CD4-positive, alpha-beta T cell (primary cell): ENCODE measurements at regions of chr1 and their contacts with region 1.

Region 1: DNA sequence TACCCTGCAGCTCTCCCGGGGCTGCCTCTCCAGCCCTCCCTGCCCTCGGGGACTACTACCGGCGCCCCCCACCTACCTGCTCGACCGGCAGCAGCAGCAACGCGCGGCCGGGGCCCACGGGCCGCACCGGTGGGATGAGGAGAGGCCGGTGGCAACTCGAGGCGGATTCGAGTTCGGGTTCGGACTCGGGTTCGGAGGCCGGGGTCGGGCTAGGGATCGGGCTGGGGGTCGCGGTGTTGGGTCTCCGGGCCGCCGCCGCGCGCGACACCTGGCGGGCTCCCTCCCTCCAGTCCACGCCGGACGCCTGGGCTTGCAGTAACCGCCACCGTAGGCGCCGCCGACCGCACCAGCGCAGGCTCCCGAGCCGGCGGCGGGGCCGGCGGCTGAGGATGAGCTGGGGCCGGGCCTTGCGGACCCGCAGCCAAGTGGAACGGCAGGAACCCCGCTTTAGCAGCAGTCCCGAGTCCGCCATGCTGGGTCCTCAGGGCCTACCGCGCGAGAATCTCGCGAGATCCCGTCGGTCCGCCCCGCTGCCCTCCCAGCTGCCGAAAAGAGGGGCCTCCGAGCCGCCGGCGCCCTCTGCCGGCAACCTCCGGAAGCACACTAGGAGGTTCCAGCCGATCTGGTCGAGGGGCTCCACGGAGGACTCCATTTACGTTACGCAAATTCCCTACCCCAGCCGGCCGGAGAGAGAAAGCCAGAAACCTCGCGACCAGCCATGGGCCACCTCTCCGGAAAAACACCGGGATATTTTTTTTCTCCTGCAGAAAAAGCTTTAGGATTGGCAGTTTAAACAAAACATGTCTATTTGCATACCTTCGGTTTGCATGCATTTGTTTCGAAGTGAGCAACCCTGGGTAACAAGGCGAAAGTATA is at the start of gene NOL9:
- DNase-seq: peak; percentile 91 to 97 (median 94)
- ATAC-seq: peak; percentile 98
- H3K4me3 ChIP-seq: peak within 1 kb of the TSS; percentile 94
- H3K4me3 Mint-ChIP-seq: peak within 1 kb of the TSS; percentile 85
- H3K27ac ChIP-seq: peak within 1 kb of the TSS; percentile 22 to 64
- H3K27ac Mint-ChIP-seq: peak within 1 kb of the TSS; percentile 70
- H3K4me1 ChIP-seq: peaks cover 30% of the 10 kb centered on the region
- H3K4me1 Mint-ChIP-seq: peaks cover 6% of the 10 kb centered on the region
- H3K27me3 ChIP-seq: no peaks in the 10 kb centered on the region
- H3K27me3 Mint-ChIP-seq: no peaks in the 10 kb centered on the region
- CTCF ChIP-seq: peak; percentile 93
- total RNA-seq, gene NOL9: 52.3 to 54.1 TPM

Region 2: DNA sequence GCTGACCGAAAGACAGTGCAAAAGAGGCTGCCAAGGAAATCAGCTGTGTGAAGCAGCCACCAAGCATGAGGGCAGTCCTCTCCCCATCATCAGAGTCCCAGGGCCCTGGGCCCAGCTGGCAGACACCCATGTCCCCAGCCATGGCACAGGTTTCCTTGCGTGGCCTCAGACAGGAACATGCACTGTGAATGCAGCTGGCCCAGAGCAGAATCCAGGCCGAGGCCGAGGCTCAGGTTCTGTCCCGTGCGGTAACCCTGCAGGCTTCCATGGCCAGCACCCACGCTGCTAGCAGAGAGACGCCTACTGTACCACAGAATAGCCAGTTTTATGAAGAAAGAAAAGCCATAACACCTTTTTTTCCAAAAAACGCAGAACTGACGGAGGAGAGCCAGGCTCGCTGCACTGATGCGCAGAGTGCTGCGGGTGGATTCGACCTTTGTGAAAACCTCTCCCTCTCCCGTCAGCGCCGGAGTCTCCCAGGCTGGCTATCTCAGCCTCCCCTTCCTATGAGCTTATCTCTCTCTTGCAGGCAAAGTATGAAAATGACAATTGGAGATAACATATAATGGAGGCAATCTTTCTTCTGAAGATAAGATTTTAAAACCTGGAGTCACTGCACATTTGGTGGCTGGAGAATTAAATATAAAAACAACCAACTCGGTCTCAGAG is 668.7 kb before region 1 on chr1:
- CTCF ChIA-PET with region 1: no interaction called
- POLR2A ChIA-PET with region 1: no interaction called
- intact Hi-C with region 1: no loop called
- DNase-seq: no peak
- ATAC-seq: no peak
- H3K4me3 ChIP-seq: no peak overlapping the region
- H3K4me3 Mint-ChIP-seq: no peak overlapping the region
- H3K27ac ChIP-seq: no peak overlapping the region
- H3K27ac Mint-ChIP-seq: no peak overlapping the region
- H3K4me1 ChIP-seq: no peaks in the 10 kb centered on the region
- H3K4me1 Mint-ChIP-seq: no peaks in the 10 kb centered on the region
- H3K27me3 ChIP-seq: no peaks in the 10 kb centered on the region
- H3K27me3 Mint-ChIP-seq: no peaks in the 10 kb centered on the region
- CTCF ChIP-seq: no peak

Region 3: GRCh38 chr1:6489799-6490180 is 64.5 kb before region 1 on chr1:
- CTCF ChIA-PET with region 1: interaction called, 4 read pairs
- POLR2A ChIA-PET with region 1: interaction called, 9 read pairs
- intact Hi-C with region 1: loop called (anchors 1 to 2 kb)
- DNase-seq: peak; percentile 59 to 90 (median 72)
- ATAC-seq: peak; percentile 58
- H3K4me3 ChIP-seq: peak overlapping the region; percentile 90
- H3K4me3 Mint-ChIP-seq: peak overlapping the region; percentile 82
- H3K27ac ChIP-seq: no peak overlapping the region
- H3K27ac Mint-ChIP-seq: no peak overlapping the region
- H3K4me1 ChIP-seq: peaks cover 58% of the 10 kb centered on the region
- H3K4me1 Mint-ChIP-seq: peaks cover 30% of the 10 kb centered on the region
- H3K27me3 ChIP-seq: peaks cover 12 to 14% of the 10 kb centered on the region in 2 experiments
- H3K27me3 Mint-ChIP-seq: peaks cover 21% of the 10 kb centered on the region
- CTCF ChIP-seq: peak; percentile 96

Region 4: GRCh38 chr1:6602669-6603237 is 48.5 kb after region 1 on chr1 and contains the start of gene KLHL21:
- CTCF ChIA-PET with region 1: interaction called, 22 read pairs
- POLR2A ChIA-PET with region 1: interaction called, 38 read pairs
- intact Hi-C with region 1: loop called in 1 of 2 experiments (anchors 10 kb)
- DNase-seq: peak; percentile 65 to 93 (median 84)
- ATAC-seq: peak; percentile 48
- H3K4me3 ChIP-seq: peak within 1 kb of the TSS; percentile 95
- H3K4me3 Mint-ChIP-seq: peak within 1 kb of the TSS; percentile 100
- H3K27ac ChIP-seq: peak within 1 kb of the TSS; percentile 80 to 95
- H3K27ac Mint-ChIP-seq: peak within 1 kb of the TSS; percentile 100
- H3K4me1 ChIP-seq: peaks cover 54% of the 10 kb centered on the region
- H3K4me1 Mint-ChIP-seq: peaks cover 36% of the 10 kb centered on the region
- H3K27me3 ChIP-seq: no peaks in the 10 kb centered on the region
- H3K27me3 Mint-ChIP-seq: no peaks in the 10 kb centered on the region
- CTCF ChIP-seq: no peak
- total RNA-seq, gene KLHL21: 32.0 to 33.5 TPM

Region 5: DNA sequence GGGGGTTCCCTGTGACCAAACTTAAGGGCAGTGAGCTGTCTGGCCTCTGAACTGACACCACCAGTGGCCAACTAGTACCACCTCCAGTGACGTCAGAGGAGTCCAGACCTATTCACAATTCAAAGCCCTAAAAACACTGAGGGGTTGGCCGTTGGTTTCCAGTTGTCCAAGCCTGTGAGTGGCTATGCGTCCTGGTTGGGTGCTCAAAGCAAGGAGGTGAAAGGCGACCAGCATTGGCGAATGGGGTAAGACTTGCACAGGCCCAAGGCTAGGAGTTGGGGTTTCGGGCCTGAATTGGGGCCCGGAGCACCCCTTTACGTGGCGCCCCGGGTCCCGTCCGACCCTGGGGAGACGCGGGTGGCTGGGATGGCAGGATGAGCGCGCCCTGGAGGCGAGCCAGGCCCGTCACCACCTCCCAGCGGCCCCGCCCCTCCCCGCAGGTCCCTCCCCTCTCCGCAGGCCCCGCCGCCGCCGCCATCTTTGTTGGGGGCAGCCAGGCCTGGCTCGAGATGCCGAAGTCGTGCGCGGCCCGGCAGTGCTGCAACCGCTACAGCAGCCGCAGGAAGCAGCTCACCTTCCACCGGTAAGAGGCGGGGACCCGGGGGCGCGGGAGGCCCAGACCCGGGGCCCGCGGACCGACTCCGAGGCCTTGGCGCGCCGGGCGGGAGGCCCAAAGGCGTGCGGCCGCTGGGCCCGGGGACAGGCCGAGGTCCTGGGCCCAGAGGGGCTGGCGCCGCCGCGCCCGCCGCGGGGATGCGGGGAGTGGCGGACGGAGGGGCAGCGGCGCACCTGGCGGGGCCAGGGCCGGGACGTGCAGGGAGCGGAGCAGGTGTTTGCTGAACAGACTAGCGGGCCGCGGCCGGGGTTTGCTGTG is 70.7 kb after region 1 on chr1 and contains the start of gene THAP3:
- CTCF ChIA-PET with region 1: interaction called, 15 read pairs
- POLR2A ChIA-PET with region 1: no interaction called
- intact Hi-C with region 1: loop called (anchors 1 to 5 kb)
- DNase-seq: peak; percentile 86 to 95 (median 90)
- ATAC-seq: peak; percentile 98
- H3K4me3 ChIP-seq: peak within 1 kb of the TSS; percentile 72
- H3K4me3 Mint-ChIP-seq: peak within 1 kb of the TSS; percentile 94
- H3K27ac ChIP-seq: peak within 1 kb of the TSS in 1 of 2 donors; percentile 38
- H3K27ac Mint-ChIP-seq: peak within 1 kb of the TSS; percentile 84
- H3K4me1 ChIP-seq: peaks cover 31% of the 10 kb centered on the region
- H3K4me1 Mint-ChIP-seq: peaks cover 29% of the 10 kb centered on the region
- H3K27me3 ChIP-seq: no peaks in the 10 kb centered on the region
- H3K27me3 Mint-ChIP-seq: no peaks in the 10 kb centered on the region
- CTCF ChIP-seq: peak; percentile 31
- total RNA-seq, gene THAP3: 15.2 to 18.7 TPM

Region 6: DNA sequence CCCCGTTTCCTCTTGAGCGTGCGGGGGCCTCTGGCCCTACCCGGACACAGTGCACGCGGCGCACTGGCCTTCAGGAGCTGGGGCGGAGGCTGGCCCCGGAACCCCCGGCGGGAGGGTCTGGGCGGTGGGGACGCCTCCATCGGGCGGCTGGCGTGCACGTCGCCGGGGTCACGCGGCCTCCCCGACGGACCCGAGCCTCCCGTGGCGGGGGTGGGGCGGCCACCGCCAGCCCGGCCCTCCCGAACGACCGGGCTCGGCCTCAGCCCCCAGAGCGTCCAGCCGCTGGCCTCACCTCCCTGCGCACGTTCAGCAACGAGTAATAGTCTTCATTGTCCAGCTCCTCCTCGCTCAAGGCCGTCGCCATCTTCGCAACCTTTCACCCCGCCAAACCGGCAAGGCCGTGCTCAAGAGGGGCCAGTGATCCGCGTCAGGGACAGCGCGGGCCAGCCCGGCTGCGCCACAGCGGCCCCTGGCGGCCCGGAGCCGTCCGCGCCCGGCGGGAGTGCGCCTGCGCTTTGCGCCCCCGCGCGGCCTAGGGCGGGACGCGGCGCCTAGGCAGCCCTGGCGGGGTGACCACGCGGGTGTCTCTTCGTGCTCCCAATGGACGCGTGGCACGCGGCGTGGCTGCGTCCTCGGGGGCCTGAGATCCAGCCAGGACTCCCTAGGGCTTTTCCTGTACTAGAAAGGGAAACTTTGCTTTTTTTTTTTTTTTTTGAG is 147.3 kb after region 1 on chr1 and contains the start of gene DNAJC11:
- CTCF ChIA-PET with region 1: interaction called, 4 read pairs
- POLR2A ChIA-PET with region 1: no interaction called
- intact Hi-C with region 1: loop called in 1 of 2 experiments (anchors 1 kb)
- DNase-seq: peak; percentile 80 to 95 (median 88)
- ATAC-seq: peak; percentile 98
- H3K4me3 ChIP-seq: peak within 1 kb of the TSS; percentile 86
- H3K4me3 Mint-ChIP-seq: peak within 1 kb of the TSS; percentile 96
- H3K27ac ChIP-seq: peak within 1 kb of the TSS in 1 of 2 donors; percentile 60
- H3K27ac Mint-ChIP-seq: peak within 1 kb of the TSS; percentile 76
- H3K4me1 ChIP-seq: peaks cover 18% of the 10 kb centered on the region
- H3K4me1 Mint-ChIP-seq: peaks cover 43% of the 10 kb centered on the region
- H3K27me3 ChIP-seq: no peaks in the 10 kb centered on the region
- H3K27me3 Mint-ChIP-seq: no peaks in the 10 kb centered on the region
- CTCF ChIP-seq: peak; percentile 55
- total RNA-seq, gene DNAJC11: 20.6 to 24.0 TPM